Aorta (tissue), 5 donors: ENCODE measurements at regions of chr10 and their contacts with region 1.

Region 1: GRCh38 chr10:122504610-122504950 is 43.2 kb downstream of the HTRA1 start:
- DNase-seq: peak; percentile 93 to 97
- ATAC-seq: peak; percentile 92
- H3K4me3 ChIP-seq: no peak overlapping the region
- H3K27ac ChIP-seq: peak overlapping the region in 1 of 2 donors; percentile 14
- H3K4me1 ChIP-seq: no peaks in the 10 kb centered on the region
- H3K27me3 ChIP-seq: no peaks in the 10 kb centered on the region

Region 2: GRCh38 chr10:122307669-122308486 is 196.7 kb before region 1 on chr10:
- intact Hi-C with region 1: loop called (anchors 5 kb)
- DNase-seq: peak; percentile 92 to 94
- ATAC-seq: peak; percentile 89
- H3K4me3 ChIP-seq: no peak overlapping the region
- H3K27ac ChIP-seq: peak overlapping the region; percentile 89 to 94
- H3K4me1 ChIP-seq: peaks cover 0 to 4% of the 10 kb centered on the region in 2 donors
- H3K27me3 ChIP-seq: no peaks in the 10 kb centered on the region

Region 3: DNA sequence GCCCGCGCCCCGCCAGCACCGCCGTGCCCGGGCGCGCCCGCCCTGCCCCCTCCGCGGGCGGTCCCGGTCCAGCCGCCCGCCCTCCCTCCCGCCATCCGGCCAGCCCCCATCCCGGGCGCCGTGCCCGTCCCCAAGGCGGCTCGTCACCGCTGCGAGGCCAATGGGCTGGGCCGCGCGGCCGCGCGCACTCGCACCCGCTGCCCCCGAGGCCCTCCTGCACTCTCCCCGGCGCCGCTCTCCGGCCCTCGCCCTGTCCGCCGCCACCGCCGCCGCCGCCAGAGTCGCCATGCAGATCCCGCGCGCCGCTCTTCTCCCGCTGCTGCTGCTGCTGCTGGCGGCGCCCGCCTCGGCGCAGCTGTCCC is 43.2 kb before region 1 on chr10 and contains the start of gene HTRA1:
- intact Hi-C with region 1: loop called (anchors 2 to 5 kb)
- DNase-seq: peak; percentile 91 to 94
- ATAC-seq: peak; percentile 81
- H3K4me3 ChIP-seq: peak within 1 kb of the TSS; percentile 88 to 94
- H3K27ac ChIP-seq: peak within 1 kb of the TSS; percentile 45 to 95
- H3K4me1 ChIP-seq: peaks cover 1 to 3% of the 10 kb centered on the region in 2 donors
- H3K27me3 ChIP-seq: no peaks in the 10 kb centered on the region
- total RNA-seq, gene HTRA1: 261 to 386 TPM